Sigmoid colon (tissue), 7 donors: ENCODE measurements at regions of chr4 and their contacts with region 1.

Region 1: DNA sequence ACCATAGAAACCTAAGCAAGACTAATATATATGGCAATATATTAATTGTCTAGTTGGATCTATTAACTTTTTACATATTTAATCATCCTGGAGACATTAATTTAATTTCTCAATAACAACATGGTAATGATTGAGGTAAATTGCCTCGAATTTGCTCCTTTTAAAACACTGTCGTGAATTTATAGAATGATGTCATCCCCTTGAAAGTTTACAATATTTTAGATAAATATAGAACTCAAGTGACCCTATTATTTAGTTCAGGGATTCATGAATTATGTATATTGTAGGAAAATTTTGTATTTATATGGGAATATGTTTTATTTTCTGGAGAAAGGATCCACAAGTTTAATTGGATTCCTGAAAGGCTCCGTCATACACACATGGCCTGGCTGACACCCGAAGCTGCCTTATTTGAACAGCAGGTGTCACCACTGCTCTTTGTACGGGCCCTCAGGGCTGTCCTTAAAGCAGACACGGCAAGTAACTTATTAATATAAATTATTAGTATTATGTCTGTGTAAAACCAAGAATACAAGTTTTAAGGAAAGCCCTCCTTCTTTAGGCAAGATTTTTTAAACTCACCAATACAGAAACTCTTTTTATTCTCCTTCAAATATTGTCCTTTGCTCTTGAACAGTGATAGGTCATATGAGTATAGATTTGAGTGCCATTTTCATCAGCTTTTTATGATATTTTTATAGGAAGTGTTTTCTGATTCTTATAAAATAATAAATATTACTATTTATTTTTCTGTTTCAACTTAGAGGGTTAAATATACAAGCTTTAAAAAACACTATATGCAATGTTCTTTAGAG is 1.9 kb upstream of the PLRG1 start:
- DNase-seq: peak; percentile 88
- H3K4me3 ChIP-seq: no peak overlapping the region
- H3K27ac ChIP-seq: peak overlapping the region; percentile 5 to 88 (median 86)
- H3K4me1 ChIP-seq: peaks cover 0 to 31% (median 20%) of the 10 kb centered on the region in 4 donors
- H3K27me3 ChIP-seq: no peaks in the 10 kb centered on the region
- CTCF ChIP-seq: peak; percentile 24 to 80 (median 70)
- EP300 ChIP-seq: no peak
- POLR2A ChIP-seq: no peak

Region 2: DNA sequence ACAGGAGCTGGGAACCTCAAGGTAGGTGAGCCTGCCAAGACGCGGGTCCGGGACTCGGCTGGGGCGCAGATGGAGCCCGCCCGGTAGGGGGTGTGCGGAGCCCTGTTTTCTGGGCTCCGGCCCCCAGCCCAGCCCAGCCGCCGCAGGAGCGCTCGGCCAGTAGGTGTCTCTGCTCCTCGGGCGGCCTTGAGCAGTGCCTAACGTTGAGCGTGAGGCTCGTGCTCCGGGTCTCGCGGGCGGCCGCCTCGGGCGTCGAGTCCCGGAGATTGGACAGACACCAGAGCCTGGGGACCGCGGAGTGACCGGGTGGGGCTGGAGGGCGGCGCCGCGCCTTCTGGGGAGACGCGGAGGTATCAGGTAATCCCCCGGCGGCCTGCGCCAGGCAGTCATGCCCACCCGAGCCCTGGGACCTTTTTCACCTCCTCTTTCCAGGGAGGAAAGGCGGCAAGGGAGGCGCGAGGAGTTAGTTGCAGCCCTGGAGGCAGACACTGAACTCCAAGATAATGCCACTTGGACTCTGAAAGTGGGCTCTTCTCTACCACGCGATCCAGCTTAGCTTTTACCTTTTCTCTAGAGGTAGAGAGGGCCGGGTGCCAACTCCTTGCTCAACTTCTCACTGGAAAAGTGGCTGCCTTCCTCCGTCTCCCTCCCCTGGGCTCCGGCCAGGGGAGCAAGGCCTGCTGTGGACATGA is 74.9 kb after region 1 on chr4:
- intact Hi-C with region 1: loop called (anchors 5 kb)
- DNase-seq: peak; percentile 76
- H3K4me3 ChIP-seq: peak overlapping the region; percentile 8 to 48 (median 39)
- H3K27ac ChIP-seq: peak overlapping the region in 3 of 4 donors; percentile 6 to 41 (median 40)
- H3K4me1 ChIP-seq: peaks cover 0 to 16% (median 15%) of the 10 kb centered on the region in 4 donors
- H3K27me3 ChIP-seq: peaks cover 0 to 4% (median 0%) of the 10 kb centered on the region in 3 donors
- CTCF ChIP-seq: peak in 3 of 4 experiments; percentile 37 to 62 (median 40)
- EP300 ChIP-seq: no peak
- POLR2A ChIP-seq: no peak